ENCODE measurements at regions of chr14 and their contacts with region 1.

Region 1: DNA sequence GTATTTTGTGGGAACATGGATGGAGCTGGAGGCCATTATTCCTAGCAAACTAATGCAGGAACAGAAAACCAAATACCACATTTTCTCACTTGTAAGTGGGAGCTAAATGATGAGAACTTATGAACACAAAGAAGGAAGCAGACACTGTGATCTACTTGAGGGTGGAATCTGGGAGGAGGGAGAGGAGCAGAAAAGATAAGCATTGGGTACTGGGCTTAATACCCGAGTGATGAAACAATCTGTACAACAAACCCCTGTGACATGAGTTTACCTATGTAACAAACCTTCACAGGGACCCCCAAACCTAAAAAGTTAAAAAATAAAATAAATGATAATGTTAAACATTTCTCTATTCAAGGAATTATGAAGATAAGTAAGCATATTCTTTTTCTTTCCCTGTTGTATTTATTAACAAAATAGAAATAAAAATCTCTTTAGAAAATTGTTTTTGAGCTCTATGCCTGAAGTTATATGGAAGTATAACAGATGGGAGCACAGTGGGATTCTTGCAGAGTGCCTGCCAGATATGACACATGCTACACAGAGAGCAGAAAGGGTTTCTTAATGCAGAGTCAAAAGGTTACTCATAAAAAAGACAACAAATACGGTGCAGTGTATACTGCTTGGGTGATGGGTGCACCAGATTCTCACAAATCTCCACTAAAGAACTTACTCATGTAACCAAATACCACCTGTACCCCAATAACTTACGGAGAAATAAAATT is 52.0 kb upstream of the SYNE2 start:
- DNase-seq: peak; percentile 19
- ATAC-seq: peak; percentile 33; the same call in 1 of the 2 replicates
- H3K4me3 ChIP-seq: no peak overlapping the region
- H3K27ac ChIP-seq: no peak overlapping the region
- H3K4me1 ChIP-seq: no peaks in the 10 kb centered on the region
- H3K27me3 ChIP-seq: no peaks in the 10 kb centered on the region
- CTCF ChIP-seq: no peak

Region 2: GRCh38 chr14:63624203-63624602 is 176.6 kb before region 1 on chr14:
- CTCF ChIA-PET with region 1: no interaction called
- POLR2A ChIA-PET with region 1: interaction called, 19 read pairs
- intact Hi-C with region 1: no loop called
- DNase-seq: no peak
- ATAC-seq: no peak
- H3K4me3 ChIP-seq: no peak overlapping the region
- H3K27ac ChIP-seq: no peak overlapping the region
- H3K4me1 ChIP-seq: no peaks in the 10 kb centered on the region
- H3K27me3 ChIP-seq: no peaks in the 10 kb centered on the region
- CTCF ChIP-seq: no peak

Region 3: GRCh38 chr14:63993992-63994391 is 193.2 kb after region 1 on chr14:
- CTCF ChIA-PET with region 1: interaction called, 11 read pairs
- POLR2A ChIA-PET with region 1: no interaction called
- intact Hi-C with region 1: loop called (anchors 1 kb)
- DNase-seq: peak; percentile 17
- ATAC-seq: peak; percentile 81
- H3K4me3 ChIP-seq: no peak overlapping the region
- H3K27ac ChIP-seq: no peak overlapping the region
- H3K4me1 ChIP-seq: no peaks in the 10 kb centered on the region
- H3K27me3 ChIP-seq: no peaks in the 10 kb centered on the region
- CTCF ChIP-seq: peak; percentile 54

Region 4: DNA sequence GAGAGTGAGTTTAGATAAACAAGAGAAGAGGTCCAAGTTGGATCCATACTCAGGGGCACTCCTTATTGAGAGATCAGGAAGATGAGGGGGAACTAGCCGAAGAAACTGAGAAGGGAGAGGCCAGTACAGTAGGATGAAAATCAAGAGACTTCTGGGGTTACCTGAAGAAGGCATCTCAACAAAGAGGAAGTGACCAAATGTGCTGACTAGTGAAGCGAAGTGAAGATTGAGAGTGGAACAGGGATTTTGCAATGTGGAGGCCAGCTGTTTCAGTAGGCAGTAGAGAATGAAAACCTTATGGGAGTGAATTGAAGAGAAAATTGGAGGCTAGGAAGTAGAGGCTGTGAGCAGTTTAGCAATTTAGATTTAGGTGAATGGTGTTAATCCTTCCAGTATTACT is 205.0 kb after region 1 on chr14:
- CTCF ChIA-PET with region 1: interaction called, 5 read pairs
- POLR2A ChIA-PET with region 1: no interaction called
- intact Hi-C with region 1: loop called (anchors 1 kb)
- DNase-seq: no peak
- ATAC-seq: no peak
- H3K4me3 ChIP-seq: no peak overlapping the region
- H3K27ac ChIP-seq: no peak overlapping the region
- H3K4me1 ChIP-seq: no peaks in the 10 kb centered on the region
- H3K27me3 ChIP-seq: no peaks in the 10 kb centered on the region
- CTCF ChIP-seq: no peak

Region 5: GRCh38 chr14:64040044-64040443 is 239.2 kb after region 1 on chr14:
- CTCF ChIA-PET with region 1: no interaction called
- POLR2A ChIA-PET with region 1: no interaction called
- intact Hi-C with region 1: loop called (anchors 1 kb)
- DNase-seq: peak; percentile 37
- ATAC-seq: 0 out of 2 replicates have a peak, but pooled peaks have one; percentile 19
- H3K4me3 ChIP-seq: no peak overlapping the region
- H3K27ac ChIP-seq: no peak overlapping the region
- H3K4me1 ChIP-seq: no peaks in the 10 kb centered on the region
- H3K27me3 ChIP-seq: no peaks in the 10 kb centered on the region
- CTCF ChIP-seq: peak; percentile 76

Region 6: GRCh38 chr14:64053694-64054528 is 253.1 kb after region 1 on chr14:
- CTCF ChIA-PET with region 1: no interaction called
- POLR2A ChIA-PET with region 1: no interaction called
- intact Hi-C with region 1: no loop called
- DNase-seq: peak; percentile 11
- ATAC-seq: peak; percentile 27; the same call in 1 of the 2 replicates
- H3K4me3 ChIP-seq: no peak overlapping the region
- H3K27ac ChIP-seq: no peak overlapping the region
- H3K4me1 ChIP-seq: no peaks in the 10 kb centered on the region
- H3K27me3 ChIP-seq: no peaks in the 10 kb centered on the region
- CTCF ChIP-seq: no peak

Measured in PC-3 (cell line).